HCT116 (cell line): ENCODE measurements at regions of chr5 and their contacts with region 1.

Region 1: GRCh38 chr5:171336521-171337209 is 27.6 kb downstream of the TLX3 start:
- DNase-seq: peak; percentile 42
- ATAC-seq: peak; percentile 93
- H3K4me3 ChIP-seq: peak overlapping the region; percentile 60 to 64
- H3K27ac ChIP-seq: no peak overlapping the region
- H3K4me1 ChIP-seq: peaks cover 0 to 14% of the 10 kb centered on the region in 2 experiments; a peak in 2 of 4 replicates
- H3K27me3 ChIP-seq: no peaks in the 10 kb centered on the region
- CTCF ChIP-seq: peak; percentile 77 to 92 (median 78)
- POLR2A ChIP-seq: no peak
- RAD21 ChIP-seq: peak; percentile 94

Region 2: DNA sequence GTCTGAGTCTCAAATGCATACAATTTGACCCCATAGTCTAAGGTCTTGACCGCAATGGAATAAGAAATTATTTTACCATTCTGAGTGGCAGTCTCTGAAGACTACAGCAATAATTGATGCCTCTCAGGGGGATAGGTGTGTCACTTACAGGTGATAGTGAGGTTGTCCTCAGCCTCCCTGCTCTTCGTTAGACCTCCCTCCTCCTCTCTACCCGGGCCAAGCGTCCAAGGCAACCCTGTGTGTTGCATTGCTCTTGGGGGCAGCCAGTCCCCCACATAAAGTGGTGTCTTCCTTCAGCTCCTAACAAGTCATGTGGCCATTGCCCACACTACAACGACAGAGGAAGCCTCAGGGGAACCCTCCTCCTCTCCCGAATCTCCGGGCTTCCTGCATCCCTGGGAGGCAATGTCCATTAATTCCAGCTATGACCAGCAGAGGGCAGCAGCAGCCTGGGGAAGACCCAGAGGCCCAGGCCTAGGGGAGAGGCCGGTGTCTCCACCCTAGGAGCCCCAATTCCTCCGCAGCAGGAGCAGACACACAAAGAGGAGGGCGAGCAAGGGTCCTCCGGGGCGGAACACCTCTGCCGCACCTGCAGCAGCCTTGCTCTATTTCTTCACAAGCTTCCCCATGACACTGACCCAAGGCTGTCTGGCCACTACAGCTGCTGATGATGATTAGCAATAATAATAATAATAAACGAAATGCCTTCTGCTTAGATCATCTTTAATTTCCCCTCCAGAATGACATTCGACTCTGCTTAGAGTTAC is 698.0 kb before region 1 on chr5:
- CTCF ChIA-PET with region 1: interaction called, 3 read pairs
- POLR2A ChIA-PET with region 1: no interaction called
- RAD21 ChIA-PET with region 1: no interaction called
- intact Hi-C with region 1: loop called (anchors 5 kb)
- DNase-seq: peak; percentile 35
- ATAC-seq: peak; percentile 98
- H3K4me3 ChIP-seq: no peak overlapping the region
- H3K27ac ChIP-seq: no peak overlapping the region
- H3K4me1 ChIP-seq: peaks cover 11 to 14% of the 10 kb centered on the region in 2 experiments
- H3K27me3 ChIP-seq: no peaks in the 10 kb centered on the region
- CTCF ChIP-seq: peak; percentile 78 to 85 (median 82)
- POLR2A ChIP-seq: no peak
- RAD21 ChIP-seq: peak; percentile 91

Region 3: DNA sequence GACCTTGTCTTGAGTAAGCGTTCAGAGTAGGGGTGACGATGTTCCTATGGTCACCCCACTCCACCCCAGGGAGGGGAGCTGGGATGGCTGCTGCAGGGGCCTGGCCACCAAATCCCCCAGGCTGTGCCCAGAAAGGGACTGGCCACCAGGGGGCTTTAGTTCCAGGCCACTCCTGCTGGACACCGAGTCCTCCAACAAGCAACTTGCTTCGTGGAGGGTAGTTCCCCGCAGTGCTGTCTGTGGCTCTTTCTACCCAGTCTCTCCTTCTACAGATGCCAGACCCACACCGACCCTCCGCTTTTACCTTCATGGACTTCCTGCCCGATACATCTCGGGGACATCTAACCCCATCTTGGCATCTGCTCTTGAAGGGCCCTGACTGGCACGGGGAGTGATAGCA is 588.8 kb before region 1 on chr5:
- CTCF ChIA-PET with region 1: interaction called, 6 read pairs
- POLR2A ChIA-PET with region 1: no interaction called
- RAD21 ChIA-PET with region 1: no interaction called
- intact Hi-C with region 1: loop called (anchors 1 kb)
- DNase-seq: peak; percentile 16
- ATAC-seq: peak; percentile 35; the same call in 1 of the 2 replicates
- H3K4me3 ChIP-seq: no peak overlapping the region
- H3K27ac ChIP-seq: no peak overlapping the region
- H3K4me1 ChIP-seq: peaks cover 0 to 10% of the 10 kb centered on the region in 2 experiments; a peak in 1 of 4 replicates
- H3K27me3 ChIP-seq: peaks cover 13% of the 10 kb centered on the region; the same call in 1 of the 2 replicates
- CTCF ChIP-seq: peak; percentile 40 to 68 (median 56); a peak in 5 of 6 replicates
- POLR2A ChIP-seq: no peak
- RAD21 ChIP-seq: peak; percentile 37; the same call in 1 of the 2 replicates

Region 4: GRCh38 chr5:170809551-170809950 is 527.1 kb before region 1 on chr5:
- CTCF ChIA-PET with region 1: interaction called, 21 read pairs
- POLR2A ChIA-PET with region 1: no interaction called
- RAD21 ChIA-PET with region 1: no interaction called
- intact Hi-C with region 1: loop called (anchors 2 kb)
- DNase-seq: peak; percentile 34
- ATAC-seq: peak; percentile 90
- H3K4me3 ChIP-seq: no peak overlapping the region
- H3K27ac ChIP-seq: no peak overlapping the region
- H3K4me1 ChIP-seq: no peaks in the 10 kb centered on the region
- H3K27me3 ChIP-seq: no peaks in the 10 kb centered on the region
- CTCF ChIP-seq: peak in 2 of 3 experiments; percentile 39 to 51; a peak in 3 of 6 replicates
- POLR2A ChIP-seq: no peak
- RAD21 ChIP-seq: peak; percentile 78

Region 5: DNA sequence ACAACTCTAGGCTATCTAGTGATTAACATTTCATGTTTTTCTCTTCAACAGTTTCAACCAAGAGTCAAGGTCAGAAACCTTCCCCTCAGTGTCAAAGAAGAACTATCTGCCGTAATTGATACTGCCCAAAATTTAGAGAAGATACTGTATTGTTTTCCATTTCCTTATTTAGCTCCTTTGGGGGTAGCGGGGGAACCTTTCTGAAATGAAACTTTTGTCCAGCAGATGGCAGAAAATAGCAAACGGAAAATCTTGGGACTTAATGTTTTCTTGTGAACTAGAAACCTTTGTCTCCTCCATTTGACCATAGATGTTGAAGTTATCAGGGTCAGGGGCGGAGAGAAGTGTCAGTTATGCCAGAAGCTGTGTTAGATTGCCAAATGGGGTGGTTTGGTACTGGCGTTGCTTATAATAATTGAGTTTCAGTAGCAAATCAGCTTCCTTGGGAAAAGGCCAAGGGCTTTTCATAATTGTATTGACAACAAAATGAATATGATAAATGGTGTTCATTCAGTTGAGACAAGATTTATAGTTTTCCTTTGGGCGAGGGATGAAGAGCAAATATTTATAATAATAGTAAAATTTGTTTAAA is 129.3 kb before region 1 on chr5:
- CTCF ChIA-PET with region 1: interaction called, 50 read pairs
- POLR2A ChIA-PET with region 1: no interaction called
- RAD21 ChIA-PET with region 1: interaction called in 1 of 2 experiments, 12 read pairs
- intact Hi-C with region 1: loop called (anchors 1 kb)
- DNase-seq: peak; percentile 43
- ATAC-seq: peak; percentile 85
- H3K4me3 ChIP-seq: no peak overlapping the region
- H3K27ac ChIP-seq: no peak overlapping the region
- H3K4me1 ChIP-seq: 0 out of 4 replicates have a peak, but pooled peaks cover 0 to 3% of the 10 kb centered on the region in 2 experiments
- H3K27me3 ChIP-seq: no peaks in the 10 kb centered on the region
- CTCF ChIP-seq: peak; percentile 56 to 79 (median 76)
- POLR2A ChIP-seq: no peak
- RAD21 ChIP-seq: peak; percentile 73

Region 6: GRCh38 chr5:171272996-171273970 is 63.4 kb before region 1 on chr5:
- CTCF ChIA-PET with region 1: interaction called, 22 read pairs
- POLR2A ChIA-PET with region 1: no interaction called
- RAD21 ChIA-PET with region 1: interaction called in 1 of 2 experiments, 6 read pairs
- intact Hi-C with region 1: loop called (anchors 1 kb)
- DNase-seq: peak; percentile 44
- ATAC-seq: peak; percentile 97
- H3K4me3 ChIP-seq: no peak overlapping the region
- H3K27ac ChIP-seq: no peak overlapping the region
- H3K4me1 ChIP-seq: no peaks in the 10 kb centered on the region
- H3K27me3 ChIP-seq: no peaks in the 10 kb centered on the region
- CTCF ChIP-seq: peak; percentile 61 to 63 (median 63)
- POLR2A ChIP-seq: no peak
- RAD21 ChIP-seq: peak; percentile 75

Region 7: DNA sequence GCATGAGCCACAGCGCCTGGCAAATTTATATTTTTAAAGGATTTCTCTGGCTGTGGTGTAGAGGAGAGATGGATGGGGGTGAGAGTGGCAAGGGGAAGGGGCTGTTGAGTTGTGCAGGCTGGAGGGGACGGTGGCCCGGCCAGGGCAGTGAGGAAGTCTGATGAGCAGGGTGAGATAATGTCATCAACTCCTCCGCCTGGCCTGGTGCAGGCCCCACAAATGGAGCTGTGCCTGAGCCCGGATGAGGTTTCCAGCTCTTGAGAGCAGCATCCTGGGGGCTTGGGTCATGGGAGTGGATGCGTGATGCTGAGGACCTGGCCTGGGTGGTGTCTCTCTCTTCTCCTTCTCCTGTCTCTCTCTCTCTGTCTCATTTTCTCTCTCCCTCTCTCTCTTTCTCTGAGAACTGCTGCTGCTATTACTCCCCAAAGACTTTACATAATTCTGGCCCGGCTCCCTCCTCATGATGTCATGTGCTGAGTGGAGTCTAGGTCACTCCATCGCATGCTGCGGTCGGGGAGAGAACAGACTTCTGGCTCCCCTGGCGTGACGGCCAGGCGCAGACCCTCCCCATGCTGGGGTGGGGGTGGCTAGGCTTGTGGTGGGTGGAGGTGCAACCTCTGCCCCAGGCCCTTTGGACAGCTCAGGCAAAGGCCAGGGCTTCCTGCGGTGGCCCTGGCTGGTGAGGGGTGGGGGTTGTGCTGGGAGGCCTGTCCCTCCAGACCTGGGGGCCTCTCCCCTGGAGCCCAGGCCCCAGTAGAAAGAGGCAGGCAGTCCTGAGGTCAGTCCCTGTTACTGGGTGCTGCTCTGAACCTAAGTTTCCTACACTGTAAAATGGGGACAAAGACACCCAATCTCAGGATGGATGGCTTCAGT is 109.2 kb after region 1 on chr5:
- CTCF ChIA-PET with region 1: no interaction called
- POLR2A ChIA-PET with region 1: no interaction called
- RAD21 ChIA-PET with region 1: no interaction called
- intact Hi-C with region 1: no loop called
- DNase-seq: no peak
- ATAC-seq: no peak
- H3K4me3 ChIP-seq: no peak overlapping the region
- H3K27ac ChIP-seq: no peak overlapping the region
- H3K4me1 ChIP-seq: peaks cover 8 to 22% of the 10 kb centered on the region in 2 experiments; a peak in 3 of 4 replicates
- H3K27me3 ChIP-seq: no peaks in the 10 kb centered on the region
- CTCF ChIP-seq: no peak
- POLR2A ChIP-seq: no peak
- RAD21 ChIP-seq: no peak